MCF 10A (cell line): ENCODE measurements at regions of chr7 and their contacts with region 1.

Region 1: GRCh38 chr7:108146070-108146837 is 16.1 kb upstream of the LAMB4 start:
- DNase-seq: peak; percentile 84
- H3K4me3 Mint-ChIP-seq: no peak overlapping the region
- H3K27ac Mint-ChIP-seq: no peak overlapping the region
- H3K4me1 Mint-ChIP-seq: no peaks in the 10 kb centered on the region
- H3K27me3 Mint-ChIP-seq: no peaks in the 10 kb centered on the region
- CTCF ChIP-seq: peak; percentile 96

Region 2: DNA sequence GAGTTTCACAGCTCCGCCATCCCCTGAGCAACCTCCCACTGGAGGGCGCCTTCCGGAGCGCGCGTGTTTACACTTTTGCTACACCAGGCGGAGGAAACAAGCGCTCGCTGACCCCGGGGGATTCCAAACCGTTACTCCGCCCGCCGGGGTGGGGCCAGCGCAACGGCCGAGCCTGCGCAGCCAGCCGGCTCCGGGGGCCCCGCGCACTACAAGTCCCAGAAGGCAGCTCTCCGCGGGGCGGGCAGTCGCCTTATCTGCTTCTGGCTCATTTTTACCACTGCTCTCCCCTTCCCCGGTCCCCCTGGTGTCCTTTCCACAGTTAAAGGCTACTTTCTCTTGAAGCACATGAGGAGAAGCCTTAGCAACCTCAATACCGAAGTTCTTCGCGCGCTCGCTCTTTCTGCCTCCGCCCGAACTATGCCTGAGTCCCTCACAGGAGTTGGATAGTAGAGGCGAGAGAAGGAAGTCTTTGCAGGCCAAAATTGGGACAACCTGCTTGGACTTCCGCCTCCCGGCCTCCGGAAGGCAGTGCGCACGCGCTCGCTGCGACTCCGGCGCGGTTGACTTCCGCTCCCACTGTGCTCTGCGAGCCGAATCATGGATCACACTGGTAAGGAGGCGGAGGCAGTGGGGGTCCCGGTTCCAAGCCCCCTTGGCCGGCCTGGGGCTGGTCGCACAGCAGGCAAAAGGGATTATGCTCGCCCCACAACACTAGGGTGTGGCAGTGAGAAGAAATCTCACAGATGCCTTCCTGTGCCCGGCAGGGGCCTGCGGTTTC is 402.5 kb before region 1 on chr7 and contains the start of gene CBLL1:
- CTCF ChIA-PET with region 1: interaction called, 3 read pairs
- POLR2A ChIA-PET with region 1: no interaction called
- intact Hi-C with region 1: loop called (anchors 1 kb)
- DNase-seq: peak; percentile 92
- H3K4me3 Mint-ChIP-seq: peak within 1 kb of the TSS; percentile 94
- H3K27ac Mint-ChIP-seq: peak within 1 kb of the TSS; percentile 97
- H3K4me1 Mint-ChIP-seq: peaks cover 21% of the 10 kb centered on the region
- H3K27me3 Mint-ChIP-seq: no peaks in the 10 kb centered on the region
- CTCF ChIP-seq: peak; percentile 58
- total RNA-seq, gene CBLL1: 34.5 and 39.7 TPM in 2 replicates

Region 3: GRCh38 chr7:107953924-107954303 is 192.3 kb before region 1 on chr7:
- CTCF ChIA-PET with region 1: interaction called, 11 read pairs
- POLR2A ChIA-PET with region 1: no interaction called
- intact Hi-C with region 1: loop called (anchors 5 kb)
- DNase-seq: no peak
- H3K4me3 Mint-ChIP-seq: no peak overlapping the region
- H3K27ac Mint-ChIP-seq: peak overlapping the region; percentile 35
- H3K4me1 Mint-ChIP-seq: peaks cover 32% of the 10 kb centered on the region
- H3K27me3 Mint-ChIP-seq: no peaks in the 10 kb centered on the region
- CTCF ChIP-seq: no peak

Region 4: DNA sequence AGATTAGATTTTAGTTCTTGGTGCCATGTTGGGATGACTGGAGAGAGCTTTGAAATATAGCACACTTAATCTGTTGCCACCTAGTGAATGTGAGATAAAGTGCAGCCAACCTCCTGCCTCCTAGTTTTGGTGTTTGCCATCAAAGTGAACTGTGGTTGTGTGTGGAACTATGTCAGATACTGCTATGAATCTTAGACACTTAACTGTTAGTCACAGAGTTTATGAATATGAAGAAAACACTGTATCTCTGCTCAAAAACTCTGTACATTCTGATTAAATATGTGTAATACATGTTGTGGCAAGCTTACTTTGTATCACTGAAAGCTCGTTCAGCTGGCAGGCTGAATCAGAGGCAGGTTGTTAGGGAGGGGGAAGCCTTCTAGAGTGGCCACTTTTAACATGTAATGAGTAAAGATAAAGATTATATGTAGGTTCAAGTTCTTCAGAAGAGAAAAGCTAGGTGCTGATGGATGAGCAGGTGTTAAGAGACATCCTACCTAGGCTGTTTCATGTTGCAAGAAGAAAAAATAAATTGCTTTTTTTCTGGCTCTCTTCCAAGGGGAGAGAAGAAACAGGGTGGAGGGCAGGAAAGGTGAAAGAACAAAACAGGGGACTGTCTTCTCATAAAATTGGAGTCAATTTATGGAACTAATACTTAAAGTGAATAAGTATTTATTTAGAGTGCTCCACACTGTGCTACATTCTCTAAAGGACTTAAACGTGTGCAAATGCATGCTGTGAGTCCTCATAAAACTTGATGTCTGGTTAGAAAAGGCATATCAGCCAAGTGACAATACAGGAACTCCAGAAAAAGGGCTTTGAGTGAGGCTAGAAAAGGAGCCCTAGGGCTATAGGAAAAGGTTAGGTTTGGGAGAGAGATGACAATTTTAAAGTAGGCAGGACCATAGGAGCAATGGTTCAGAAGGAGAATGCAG is 129.1 kb before region 1 on chr7:
- CTCF ChIA-PET with region 1: interaction called, 11 read pairs
- POLR2A ChIA-PET with region 1: no interaction called
- intact Hi-C with region 1: no loop called
- DNase-seq: peak; percentile 65
- H3K4me3 Mint-ChIP-seq: no peak overlapping the region
- H3K27ac Mint-ChIP-seq: no peak overlapping the region
- H3K4me1 Mint-ChIP-seq: peaks cover 11% of the 10 kb centered on the region
- H3K27me3 Mint-ChIP-seq: no peaks in the 10 kb centered on the region
- CTCF ChIP-seq: peak; percentile 40

Region 5: GRCh38 chr7:108114117-108114841 is 32.0 kb before region 1 on chr7:
- CTCF ChIA-PET with region 1: interaction called, 79 read pairs
- POLR2A ChIA-PET with region 1: interaction called, 12 read pairs
- intact Hi-C with region 1: loop called (anchors 1 kb)
- DNase-seq: peak; percentile 48
- H3K4me3 Mint-ChIP-seq: no peak overlapping the region
- H3K27ac Mint-ChIP-seq: no peak overlapping the region
- H3K4me1 Mint-ChIP-seq: no peaks in the 10 kb centered on the region
- H3K27me3 Mint-ChIP-seq: no peaks in the 10 kb centered on the region
- CTCF ChIP-seq: peak; percentile 61

Region 6: DNA sequence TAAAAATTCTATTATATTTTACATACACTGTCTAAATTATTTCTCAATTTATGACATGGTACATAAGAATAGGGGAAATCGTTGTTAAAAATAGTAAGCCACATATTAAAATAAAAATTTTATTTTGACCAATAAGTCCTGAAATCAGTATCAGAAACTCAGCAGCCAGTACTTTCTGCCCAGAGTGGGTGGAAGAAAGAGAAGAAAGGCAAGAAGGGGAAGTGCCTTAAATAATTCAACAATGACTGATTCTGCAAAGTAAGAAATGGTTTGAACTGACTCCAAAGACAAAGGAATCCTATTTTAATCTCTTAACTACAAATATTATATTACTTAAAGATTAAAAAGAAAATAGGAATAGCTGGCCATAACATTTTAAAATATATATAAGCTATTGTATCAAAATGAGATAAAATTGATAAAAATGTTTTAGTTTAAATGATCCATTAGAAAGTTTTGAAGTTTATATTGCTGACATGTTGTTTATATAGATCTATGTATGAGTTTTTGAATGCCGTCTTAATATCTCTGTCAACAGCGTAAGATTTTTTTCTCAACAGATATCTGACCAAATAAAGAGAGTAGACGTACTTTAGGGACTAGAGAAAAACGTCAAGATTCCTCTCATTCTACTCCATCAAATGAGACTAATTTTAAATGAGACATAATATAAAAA is 340.2 kb after region 1 on chr7:
- CTCF ChIA-PET with region 1: no interaction called
- POLR2A ChIA-PET with region 1: no interaction called
- intact Hi-C with region 1: no loop called
- DNase-seq: no peak
- H3K4me3 Mint-ChIP-seq: no peak overlapping the region
- H3K27ac Mint-ChIP-seq: no peak overlapping the region
- H3K4me1 Mint-ChIP-seq: no peaks in the 10 kb centered on the region
- H3K27me3 Mint-ChIP-seq: no peaks in the 10 kb centered on the region
- CTCF ChIP-seq: no peak

Region 7: DNA sequence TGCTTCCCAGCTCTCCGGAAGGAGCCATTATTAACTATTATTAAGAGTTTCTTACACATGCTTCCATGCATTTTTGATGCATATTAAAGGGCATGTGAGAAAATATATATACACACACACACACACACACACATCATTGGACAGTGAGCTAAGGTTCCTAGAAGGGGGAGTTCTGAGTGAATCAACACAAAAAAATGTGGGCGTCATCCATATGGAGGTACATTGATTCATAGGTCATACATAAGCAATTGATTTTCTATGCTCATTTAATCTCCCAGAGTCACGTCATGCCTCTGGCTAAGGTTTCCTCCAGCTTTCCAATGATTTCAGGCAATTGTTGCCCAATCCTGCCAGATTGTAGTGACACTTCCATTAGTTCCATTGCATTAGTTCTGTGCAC is 692.8 kb after region 1 on chr7:
- CTCF ChIA-PET with region 1: no interaction called
- POLR2A ChIA-PET with region 1: no interaction called
- intact Hi-C with region 1: no loop called
- DNase-seq: no peak
- H3K4me3 Mint-ChIP-seq: no peak overlapping the region
- H3K27ac Mint-ChIP-seq: no peak overlapping the region
- H3K4me1 Mint-ChIP-seq: no peaks in the 10 kb centered on the region
- H3K27me3 Mint-ChIP-seq: peaks cover 37% of the 10 kb centered on the region
- CTCF ChIP-seq: no peak